ENCODE measurements at regions of chr3 and their contacts with region 1.

Region 1: DNA sequence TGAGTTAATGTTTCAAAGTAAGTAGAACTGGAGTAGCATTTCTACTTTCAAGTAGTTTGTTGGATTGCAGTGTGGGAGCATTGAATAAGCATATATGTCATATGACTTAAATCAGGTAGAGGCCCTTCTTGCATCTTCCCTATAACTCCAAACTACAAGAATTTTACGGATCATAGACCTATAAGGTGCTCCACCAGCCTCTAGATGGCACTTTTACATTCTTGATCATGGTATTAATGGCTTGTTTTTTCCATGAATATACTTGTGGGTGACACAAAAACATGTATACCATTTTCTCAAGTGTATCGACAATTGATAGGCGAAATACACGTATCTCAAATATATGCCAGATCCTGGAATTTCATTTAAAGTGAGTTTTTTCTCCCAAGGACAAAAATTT is 311.1 kb downstream of the ZPLD1 start:
- DNase-seq: no peak
- H3K4me3 ChIP-seq: no peak overlapping the region
- H3K4me3 Mint-ChIP-seq: no peak overlapping the region
- H3K27ac Mint-ChIP-seq: no peak overlapping the region
- H3K4me1 ChIP-seq: no peaks in the 10 kb centered on the region
- H3K4me1 Mint-ChIP-seq: no peaks in the 10 kb centered on the region
- H3K27me3 ChIP-seq: no peaks in the 10 kb centered on the region
- H3K27me3 Mint-ChIP-seq: no peaks in the 10 kb centered on the region
- CTCF ChIP-seq: peak; percentile 10 to 11

Region 2: DNA sequence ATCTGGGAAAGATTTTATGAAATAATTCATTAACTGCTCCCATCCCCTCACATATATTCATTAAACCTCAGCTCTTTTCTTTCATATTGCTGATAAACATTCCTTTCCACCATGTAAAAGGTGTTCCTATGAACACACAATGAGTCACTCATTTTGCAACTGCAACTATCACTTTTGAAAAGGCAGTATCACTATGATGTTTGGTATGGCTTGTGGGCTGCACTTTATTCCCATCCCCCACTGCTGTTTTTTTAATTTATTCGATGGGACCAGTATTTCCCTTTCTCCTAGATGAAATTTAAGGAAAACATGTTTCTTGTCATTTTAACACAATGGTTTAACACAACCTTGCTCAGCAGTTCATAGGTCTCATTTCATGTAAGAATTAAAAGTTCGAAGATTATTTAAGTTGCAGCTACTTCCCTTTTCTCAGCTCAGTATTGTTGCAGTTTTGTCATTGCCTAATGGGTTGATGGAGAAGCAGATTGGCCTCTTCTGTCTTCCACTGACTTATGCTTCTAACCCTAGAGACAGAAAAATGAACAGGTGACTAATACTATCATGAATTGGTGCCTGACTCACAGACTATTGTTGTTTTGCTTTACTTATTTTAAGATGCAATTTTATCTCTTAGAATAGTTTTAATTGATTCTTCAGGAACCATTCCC is 30.7 kb before region 1 on chr3:
- CTCF ChIA-PET with region 1: no interaction called
- POLR2A ChIA-PET with region 1: no interaction called
- intact Hi-C with region 1: no loop called
- DNase-seq: no peak
- H3K4me3 ChIP-seq: no peak overlapping the region
- H3K4me3 Mint-ChIP-seq: no peak overlapping the region
- H3K27ac Mint-ChIP-seq: no peak overlapping the region
- H3K4me1 ChIP-seq: no peaks in the 10 kb centered on the region
- H3K4me1 Mint-ChIP-seq: no peaks in the 10 kb centered on the region
- H3K27me3 ChIP-seq: no peaks in the 10 kb centered on the region
- H3K27me3 Mint-ChIP-seq: no peaks in the 10 kb centered on the region
- CTCF ChIP-seq: no peak

Region 3: GRCh38 chr3:102796804-102797203 is 50.9 kb after region 1 on chr3:
- CTCF ChIA-PET with region 1: no interaction called
- POLR2A ChIA-PET with region 1: no interaction called
- intact Hi-C with region 1: no loop called
- DNase-seq: no peak
- H3K4me3 ChIP-seq: no peak overlapping the region
- H3K4me3 Mint-ChIP-seq: no peak overlapping the region
- H3K27ac Mint-ChIP-seq: no peak overlapping the region
- H3K4me1 ChIP-seq: no peaks in the 10 kb centered on the region
- H3K4me1 Mint-ChIP-seq: no peaks in the 10 kb centered on the region
- H3K27me3 ChIP-seq: no peaks in the 10 kb centered on the region
- H3K27me3 Mint-ChIP-seq: no peaks in the 10 kb centered on the region
- CTCF ChIP-seq: no peak

Region 4: DNA sequence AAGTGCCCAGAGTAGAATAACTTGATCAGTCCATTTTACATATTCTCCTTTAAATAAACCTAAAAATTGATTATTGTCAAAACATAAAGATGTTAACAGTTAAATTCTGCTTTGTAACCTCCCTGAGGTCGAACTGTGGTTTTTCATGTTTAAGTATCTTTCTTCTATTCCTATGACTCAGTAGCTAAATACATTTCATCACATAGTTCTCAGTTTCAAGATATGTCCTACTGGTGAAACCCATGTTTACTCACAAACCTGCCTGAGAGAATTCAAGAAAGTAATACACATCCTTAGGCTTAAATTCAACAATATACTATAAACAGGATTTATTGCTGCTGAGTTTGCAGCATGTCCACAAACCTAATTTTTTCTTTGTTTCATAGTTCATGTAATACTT is 381.9 kb after region 1 on chr3:
- CTCF ChIA-PET with region 1: no interaction called
- POLR2A ChIA-PET with region 1: no interaction called
- intact Hi-C with region 1: loop called (anchors 10 kb)
- DNase-seq: no peak
- H3K4me3 ChIP-seq: no peak overlapping the region
- H3K4me3 Mint-ChIP-seq: no peak overlapping the region
- H3K27ac Mint-ChIP-seq: no peak overlapping the region
- H3K4me1 ChIP-seq: no peaks in the 10 kb centered on the region
- H3K4me1 Mint-ChIP-seq: no peaks in the 10 kb centered on the region
- H3K27me3 ChIP-seq: no peaks in the 10 kb centered on the region
- H3K27me3 Mint-ChIP-seq: no peaks in the 10 kb centered on the region
- CTCF ChIP-seq: no peak